ENCODE measurements at regions of chr18 and their contacts with region 1.

Region 1: DNA sequence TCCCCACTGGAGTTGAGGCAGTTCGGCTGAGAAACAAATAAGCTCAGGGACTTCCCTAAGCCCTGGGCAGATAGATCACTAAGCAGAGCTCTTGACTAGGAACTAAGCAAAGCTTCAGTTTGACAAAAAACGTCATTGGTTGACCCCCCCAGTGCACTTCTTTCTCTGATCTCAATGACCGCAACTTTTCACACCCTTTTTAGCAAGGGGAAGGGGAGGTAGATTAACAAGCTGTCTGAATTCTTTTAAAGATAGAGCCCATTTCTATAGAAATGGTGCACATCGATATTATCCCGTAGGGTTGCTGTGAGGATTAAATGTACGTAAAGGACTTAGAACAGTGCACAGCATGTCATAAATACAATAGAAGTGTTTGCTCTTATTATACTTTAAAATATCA is 42.5 kb downstream of the PIEZO2 start:
- DNase-seq: peak; percentile 32 to 42
- H3K4me3 ChIP-seq: no peak overlapping the region
- H3K4me3 Mint-ChIP-seq: peak overlapping the region; percentile 65
- H3K27ac Mint-ChIP-seq: peak overlapping the region; percentile 89
- H3K4me1 ChIP-seq: peaks cover 21% of the 10 kb centered on the region
- H3K4me1 Mint-ChIP-seq: peaks cover 6% of the 10 kb centered on the region
- H3K27me3 ChIP-seq: no peaks in the 10 kb centered on the region
- H3K27me3 Mint-ChIP-seq: no peaks in the 10 kb centered on the region
- CTCF ChIP-seq: no peak

Region 2: GRCh38 chr18:10936176-10937053 is 170.5 kb before region 1 on chr18:
- CTCF ChIA-PET with region 1: no interaction called
- POLR2A ChIA-PET with region 1: no interaction called
- intact Hi-C with region 1: no loop called
- DNase-seq: no peak
- H3K4me3 ChIP-seq: no peak overlapping the region
- H3K4me3 Mint-ChIP-seq: no peak overlapping the region
- H3K27ac Mint-ChIP-seq: no peak overlapping the region
- H3K4me1 ChIP-seq: no peaks in the 10 kb centered on the region
- H3K4me1 Mint-ChIP-seq: no peaks in the 10 kb centered on the region
- H3K27me3 ChIP-seq: no peaks in the 10 kb centered on the region
- H3K27me3 Mint-ChIP-seq: no peaks in the 10 kb centered on the region
- CTCF ChIP-seq: no peak

Region 3: GRCh38 chr18:11040823-11041656 is 65.9 kb before region 1 on chr18:
- CTCF ChIA-PET with region 1: no interaction called
- POLR2A ChIA-PET with region 1: no interaction called
- intact Hi-C with region 1: no loop called
- DNase-seq: peak; percentile 51 to 69
- H3K4me3 ChIP-seq: no peak overlapping the region
- H3K4me3 Mint-ChIP-seq: no peak overlapping the region
- H3K27ac Mint-ChIP-seq: no peak overlapping the region
- H3K4me1 ChIP-seq: no peaks in the 10 kb centered on the region
- H3K4me1 Mint-ChIP-seq: no peaks in the 10 kb centered on the region
- H3K27me3 ChIP-seq: no peaks in the 10 kb centered on the region
- H3K27me3 Mint-ChIP-seq: no peaks in the 10 kb centered on the region
- CTCF ChIP-seq: peak; percentile 67 to 81

Region 4: GRCh38 chr18:11081009-11081532 is 25.8 kb before region 1 on chr18:
- CTCF ChIA-PET with region 1: no interaction called
- POLR2A ChIA-PET with region 1: no interaction called
- intact Hi-C with region 1: no loop called
- DNase-seq: no peak
- H3K4me3 ChIP-seq: no peak overlapping the region
- H3K4me3 Mint-ChIP-seq: no peak overlapping the region
- H3K27ac Mint-ChIP-seq: no peak overlapping the region
- H3K4me1 ChIP-seq: no peaks in the 10 kb centered on the region
- H3K4me1 Mint-ChIP-seq: no peaks in the 10 kb centered on the region
- H3K27me3 ChIP-seq: no peaks in the 10 kb centered on the region; the same call in none of the 2 replicates
- H3K27me3 Mint-ChIP-seq: peaks cover 4% of the 10 kb centered on the region
- CTCF ChIP-seq: no peak

Region 5: GRCh38 chr18:11119962-11120361 is 13.1 kb after region 1 on chr18:
- CTCF ChIA-PET with region 1: no interaction called
- POLR2A ChIA-PET with region 1: no interaction called
- intact Hi-C with region 1: loop called (anchors 2 kb)
- DNase-seq: peak; percentile 76
- H3K4me3 ChIP-seq: no peak overlapping the region
- H3K4me3 Mint-ChIP-seq: peak overlapping the region; percentile 39
- H3K27ac Mint-ChIP-seq: peak overlapping the region; percentile 47
- H3K4me1 ChIP-seq: peaks cover 59% of the 10 kb centered on the region
- H3K4me1 Mint-ChIP-seq: peaks cover 9% of the 10 kb centered on the region
- H3K27me3 ChIP-seq: no peaks in the 10 kb centered on the region
- H3K27me3 Mint-ChIP-seq: no peaks in the 10 kb centered on the region
- CTCF ChIP-seq: no peak

Region 6: GRCh38 chr18:11149441-11150270 is 42.8 kb after region 1 on chr18 and contains the start of gene PIEZO2:
- CTCF ChIA-PET with region 1: no interaction called
- POLR2A ChIA-PET with region 1: no interaction called
- intact Hi-C with region 1: no loop called
- DNase-seq: no peak
- H3K4me3 ChIP-seq: no peak within 1 kb of the TSS
- H3K4me3 Mint-ChIP-seq: no peak within 1 kb of the TSS
- H3K27ac Mint-ChIP-seq: no peak within 1 kb of the TSS
- H3K4me1 ChIP-seq: no peaks in the 10 kb centered on the region
- H3K4me1 Mint-ChIP-seq: no peaks in the 10 kb centered on the region
- H3K27me3 ChIP-seq: no peaks in the 10 kb centered on the region
- H3K27me3 Mint-ChIP-seq: no peaks in the 10 kb centered on the region
- CTCF ChIP-seq: no peak
- total RNA-seq, gene PIEZO2: 0.11 and 0.51 TPM in 2 replicates